H1 (cell line): ENCODE measurements at regions of chr14 and their contacts with region 1.

Region 1: DNA sequence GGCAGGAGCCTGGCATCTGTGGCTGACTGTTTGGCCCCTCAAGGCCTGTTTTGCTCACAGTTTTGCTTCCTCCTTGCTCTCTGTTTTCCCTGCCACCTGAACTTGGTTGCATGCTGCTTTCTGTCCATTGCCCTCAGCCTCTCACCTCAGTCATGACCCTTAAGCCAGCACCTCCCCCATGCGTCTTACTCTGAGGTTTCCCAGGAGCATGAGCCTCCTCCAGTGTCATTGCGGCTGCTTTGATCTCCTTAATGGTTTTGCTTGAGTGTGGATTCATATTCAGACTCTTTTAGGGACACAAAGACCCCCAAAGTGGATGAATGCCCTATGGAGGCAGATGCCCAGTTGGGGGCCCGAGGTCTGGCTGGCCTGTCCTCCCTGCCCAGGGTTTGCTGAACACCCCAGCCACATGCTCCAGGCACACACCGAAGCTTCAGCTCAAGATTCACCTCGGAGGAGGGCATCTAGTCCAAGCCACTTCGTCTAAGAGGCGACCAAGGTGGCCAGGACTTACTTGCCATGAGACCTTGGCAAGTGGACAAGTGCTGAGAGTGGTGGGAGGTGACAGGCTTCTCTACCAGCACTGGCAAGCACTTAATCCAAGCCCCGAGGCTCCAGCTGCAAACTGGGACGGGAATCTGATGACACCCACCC is 95.4 kb upstream of the DIO3 start:
- DNase-seq: no peak
- H3K4me3 ChIP-seq: no peak overlapping the region
- H3K27ac ChIP-seq: no peak overlapping the region
- H3K4me1 ChIP-seq: no peaks in the 10 kb centered on the region
- H3K27me3 ChIP-seq: peaks cover 0 to 12% (median 8%) of the 10 kb centered on the region in 4 experiments; a peak in 6 of 7 replicates
- CTCF ChIP-seq: no peak
- EP300 ChIP-seq: no peak
- POLR2A ChIP-seq: no peak
- RAD21 ChIP-seq: no peak

Region 2: DNA sequence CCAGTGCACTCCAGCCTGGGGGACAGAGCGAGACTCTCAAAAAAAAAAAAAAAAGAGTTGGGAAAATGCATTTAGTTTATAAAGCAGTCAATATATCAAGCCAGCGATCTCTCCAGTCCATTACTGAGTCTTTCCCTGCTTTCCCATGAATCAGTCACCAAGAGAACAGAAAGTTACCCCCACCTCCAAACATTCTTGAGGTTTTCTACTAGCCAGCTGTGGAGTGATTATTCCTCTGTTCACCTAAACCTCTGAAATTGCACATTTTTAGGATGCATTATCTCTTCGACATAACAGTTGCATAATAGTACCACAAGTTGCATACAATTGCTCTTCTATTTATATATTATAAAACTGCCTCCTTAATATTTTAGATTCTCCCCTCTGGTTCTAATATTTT is 39.5 kb before region 1 on chr14:
- CTCF ChIA-PET with region 1: no interaction called
- POLR2A ChIA-PET with region 1: no interaction called
- DNase-seq: no peak
- H3K4me3 ChIP-seq: no peak overlapping the region
- H3K27ac ChIP-seq: no peak overlapping the region
- H3K4me1 ChIP-seq: no peaks in the 10 kb centered on the region
- H3K27me3 ChIP-seq: no peaks in the 10 kb centered on the region
- CTCF ChIP-seq: no peak
- EP300 ChIP-seq: no peak
- POLR2A ChIP-seq: no peak
- RAD21 ChIP-seq: no peak

Region 3: DNA sequence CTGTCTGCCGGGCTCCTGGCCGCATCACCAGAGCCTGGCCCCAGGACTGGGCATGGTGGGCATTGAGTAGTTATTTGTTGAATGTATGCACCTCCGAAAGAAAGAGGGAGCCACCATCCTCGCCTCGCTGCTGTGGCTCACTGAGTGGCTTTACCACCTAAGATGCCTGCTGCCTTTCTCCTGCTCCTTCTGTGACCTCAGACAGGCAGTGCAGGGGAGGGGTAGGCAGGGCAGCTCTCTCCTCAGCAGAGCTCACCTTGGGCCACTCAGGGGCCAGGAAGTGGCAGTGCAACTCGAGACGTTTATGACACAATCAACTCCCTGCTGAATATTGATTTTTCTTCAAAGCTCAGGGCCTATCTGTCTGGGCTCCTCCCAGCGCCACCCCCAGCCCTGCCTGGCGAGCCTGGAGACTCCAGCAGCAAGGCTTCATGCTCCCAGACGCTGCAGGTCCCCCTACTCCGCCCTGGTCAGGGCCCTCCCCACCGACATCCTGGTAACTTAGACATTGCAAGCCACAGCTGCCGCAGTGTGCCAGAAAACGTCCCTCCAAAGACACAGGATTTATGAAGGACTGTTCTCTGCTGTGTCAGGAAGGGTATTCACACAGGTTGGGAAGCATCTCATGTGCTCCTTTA is 11.1 kb after region 1 on chr14:
- CTCF ChIA-PET with region 1: interaction called, 11 read pairs
- POLR2A ChIA-PET with region 1: no interaction called
- DNase-seq: peak; percentile 36 to 69
- H3K4me3 ChIP-seq: no peak overlapping the region
- H3K27ac ChIP-seq: no peak overlapping the region
- H3K4me1 ChIP-seq: peaks cover 3 to 16% (median 8%) of the 10 kb centered on the region in 4 experiments
- H3K27me3 ChIP-seq: no peaks in the 10 kb centered on the region; a peak in 1 of 7 replicates
- CTCF ChIP-seq: no peak
- EP300 ChIP-seq: no peak
- POLR2A ChIP-seq: no peak
- RAD21 ChIP-seq: 0 out of 4 replicates have a peak, but pooled peaks of 1 of the 2 experiments have one; percentile 13